Activated CD8-positive, alpha-beta T cell treated with anti-CD3 and anti-CD28 coated beads, Interleukin-2, amount 10 ng/mL, durations not matched to agents 7 days and 5 days (primary cell): ENCODE measurements at regions of chr14 and their contacts with region 1.

Region 1: GRCh38 chr14:70907176-70907995 is at the start of gene PCNX1:
- DNase-seq: peak; percentile 93
- ATAC-seq: peak; percentile 86
- H3K4me3 Mint-ChIP-seq: peak within 1 kb of the TSS; percentile 82
- H3K27ac Mint-ChIP-seq: peak within 1 kb of the TSS; percentile 93
- H3K4me1 Mint-ChIP-seq: peaks cover 56% of the 10 kb centered on the region
- H3K27me3 Mint-ChIP-seq: no peaks in the 10 kb centered on the region
- total RNA-seq, gene PCNX1: 67.8 to 68.9 TPM

Region 2: GRCh38 chr14:70816525-70816924 is 90.9 kb before region 1 on chr14:
- CTCF ChIA-PET with region 1: interaction called, 73 read pairs
- POLR2A ChIA-PET with region 1: interaction called, 4 read pairs
- DNase-seq: no peak
- ATAC-seq: no peak
- H3K4me3 Mint-ChIP-seq: no peak overlapping the region
- H3K27ac Mint-ChIP-seq: no peak overlapping the region
- H3K4me1 Mint-ChIP-seq: peaks cover 36% of the 10 kb centered on the region
- H3K27me3 Mint-ChIP-seq: peaks cover 16% of the 10 kb centered on the region

Region 3: GRCh38 chr14:70842851-70843462 is 64.4 kb before region 1 on chr14:
- CTCF ChIA-PET with region 1: no interaction called
- POLR2A ChIA-PET with region 1: no interaction called
- DNase-seq: no peak
- ATAC-seq: no peak
- H3K4me3 Mint-ChIP-seq: no peak overlapping the region
- H3K27ac Mint-ChIP-seq: no peak overlapping the region
- H3K4me1 Mint-ChIP-seq: no peaks in the 10 kb centered on the region
- H3K27me3 Mint-ChIP-seq: peaks cover 7% of the 10 kb centered on the region

Region 4: DNA sequence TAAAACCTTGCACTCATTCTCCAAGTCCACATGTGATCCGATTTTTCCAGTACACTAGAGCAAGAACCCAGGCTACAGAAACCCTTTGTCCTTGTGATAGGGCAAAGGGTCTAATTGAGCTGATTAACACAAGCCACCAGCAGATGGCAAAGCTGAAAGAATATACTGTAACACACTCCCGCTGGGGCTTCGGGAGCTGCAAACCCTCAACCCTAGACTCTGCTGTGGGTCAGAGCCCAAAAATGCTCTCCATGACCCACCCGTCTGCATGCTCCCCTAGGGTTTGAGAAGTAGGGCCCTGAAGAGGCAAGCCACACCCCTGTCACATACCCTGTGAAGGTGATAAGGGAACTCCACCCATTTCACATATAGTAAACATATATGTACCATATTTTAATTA is 33.8 kb before region 1 on chr14:
- CTCF ChIA-PET with region 1: interaction called, 25 read pairs
- POLR2A ChIA-PET with region 1: interaction called, 14 read pairs
- DNase-seq: peak; percentile 36
- ATAC-seq: peak; percentile 17
- H3K4me3 Mint-ChIP-seq: no peak overlapping the region
- H3K27ac Mint-ChIP-seq: peak overlapping the region; percentile 55
- H3K4me1 Mint-ChIP-seq: peaks cover 36% of the 10 kb centered on the region
- H3K27me3 Mint-ChIP-seq: no peaks in the 10 kb centered on the region

Region 5: GRCh38 chr14:70919774-70920173 is 12.4 kb after region 1 on chr14:
- CTCF ChIA-PET with region 1: interaction called, 51 read pairs
- POLR2A ChIA-PET with region 1: interaction called, 4 read pairs
- DNase-seq: no peak
- ATAC-seq: peak; percentile 32
- H3K4me3 Mint-ChIP-seq: peak overlapping the region; percentile 37
- H3K27ac Mint-ChIP-seq: peak overlapping the region; percentile 84
- H3K4me1 Mint-ChIP-seq: peaks cover 82% of the 10 kb centered on the region
- H3K27me3 Mint-ChIP-seq: no peaks in the 10 kb centered on the region

Region 6: GRCh38 chr14:70934502-70935134 is 27.2 kb after region 1 on chr14:
- CTCF ChIA-PET with region 1: interaction called, 26 read pairs
- POLR2A ChIA-PET with region 1: interaction called, 4 read pairs
- DNase-seq: no peak
- ATAC-seq: peak; percentile 85
- H3K4me3 Mint-ChIP-seq: peak overlapping the region; percentile 47
- H3K27ac Mint-ChIP-seq: peak overlapping the region; percentile 77
- H3K4me1 Mint-ChIP-seq: peaks cover 54% of the 10 kb centered on the region
- H3K27me3 Mint-ChIP-seq: no peaks in the 10 kb centered on the region

Region 7: DNA sequence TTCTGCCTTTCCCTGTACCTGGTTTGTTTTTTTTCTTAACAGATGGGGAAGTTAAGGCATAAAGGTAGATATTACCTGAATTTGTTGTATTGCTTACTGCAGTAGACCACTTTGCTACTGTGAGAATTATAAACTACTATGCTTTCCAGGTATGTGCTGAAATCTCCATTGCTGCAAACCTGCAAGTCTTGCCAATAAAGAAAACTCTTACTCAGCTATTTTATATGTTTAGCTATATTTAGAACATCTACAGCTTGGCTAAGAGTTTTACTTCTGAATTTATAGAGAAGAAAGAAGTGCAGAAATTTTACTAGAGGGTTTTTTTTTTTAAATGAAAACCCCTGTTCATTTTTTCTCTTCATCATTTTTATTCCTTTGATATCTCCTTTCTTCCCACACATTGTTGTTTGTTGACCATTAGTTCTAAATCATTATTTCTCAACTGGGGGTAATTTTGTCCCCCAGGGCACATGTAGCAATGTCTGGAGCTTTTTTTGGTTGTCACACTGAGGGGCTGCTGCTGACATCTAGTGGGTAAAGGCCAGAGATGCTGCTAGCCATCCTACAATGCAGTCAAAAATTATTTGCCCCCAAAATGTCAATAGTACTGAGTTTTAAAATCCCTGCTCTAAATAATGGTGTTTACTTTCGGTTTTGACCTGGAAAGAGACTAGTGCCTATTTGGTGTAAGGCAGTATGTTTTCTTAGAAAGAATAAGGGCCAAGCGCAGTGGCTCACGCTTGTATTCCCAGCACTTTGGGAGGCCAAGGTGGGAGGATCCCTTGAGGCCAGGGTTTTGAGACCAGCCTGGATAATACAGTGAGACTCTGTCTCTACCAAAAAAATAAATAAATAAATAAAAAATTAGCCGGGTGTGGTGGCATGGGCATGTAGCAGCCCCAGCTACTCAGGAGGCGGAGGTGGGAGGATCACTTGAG is 48.4 kb after region 1 on chr14:
- CTCF ChIA-PET with region 1: interaction called, 176 read pairs
- POLR2A ChIA-PET with region 1: interaction called, 9 read pairs
- DNase-seq: peak; percentile 64
- ATAC-seq: peak; percentile 75
- H3K4me3 Mint-ChIP-seq: no peak overlapping the region
- H3K27ac Mint-ChIP-seq: no peak overlapping the region
- H3K4me1 Mint-ChIP-seq: peaks cover 23% of the 10 kb centered on the region
- H3K27me3 Mint-ChIP-seq: no peaks in the 10 kb centered on the region

Region 8: GRCh38 chr14:70981000-70981952 is 73.9 kb after region 1 on chr14:
- CTCF ChIA-PET with region 1: interaction called, 21 read pairs
- POLR2A ChIA-PET with region 1: interaction called, 4 read pairs
- DNase-seq: no peak
- ATAC-seq: peak; percentile 44
- H3K4me3 Mint-ChIP-seq: peak overlapping the region; percentile 19
- H3K27ac Mint-ChIP-seq: peak overlapping the region; percentile 81
- H3K4me1 Mint-ChIP-seq: peaks cover 22% of the 10 kb centered on the region
- H3K27me3 Mint-ChIP-seq: no peaks in the 10 kb centered on the region